Psoas muscle (tissue), 8 donors: ENCODE measurements at regions of chr3 and their contacts with region 1.

Region 1: DNA sequence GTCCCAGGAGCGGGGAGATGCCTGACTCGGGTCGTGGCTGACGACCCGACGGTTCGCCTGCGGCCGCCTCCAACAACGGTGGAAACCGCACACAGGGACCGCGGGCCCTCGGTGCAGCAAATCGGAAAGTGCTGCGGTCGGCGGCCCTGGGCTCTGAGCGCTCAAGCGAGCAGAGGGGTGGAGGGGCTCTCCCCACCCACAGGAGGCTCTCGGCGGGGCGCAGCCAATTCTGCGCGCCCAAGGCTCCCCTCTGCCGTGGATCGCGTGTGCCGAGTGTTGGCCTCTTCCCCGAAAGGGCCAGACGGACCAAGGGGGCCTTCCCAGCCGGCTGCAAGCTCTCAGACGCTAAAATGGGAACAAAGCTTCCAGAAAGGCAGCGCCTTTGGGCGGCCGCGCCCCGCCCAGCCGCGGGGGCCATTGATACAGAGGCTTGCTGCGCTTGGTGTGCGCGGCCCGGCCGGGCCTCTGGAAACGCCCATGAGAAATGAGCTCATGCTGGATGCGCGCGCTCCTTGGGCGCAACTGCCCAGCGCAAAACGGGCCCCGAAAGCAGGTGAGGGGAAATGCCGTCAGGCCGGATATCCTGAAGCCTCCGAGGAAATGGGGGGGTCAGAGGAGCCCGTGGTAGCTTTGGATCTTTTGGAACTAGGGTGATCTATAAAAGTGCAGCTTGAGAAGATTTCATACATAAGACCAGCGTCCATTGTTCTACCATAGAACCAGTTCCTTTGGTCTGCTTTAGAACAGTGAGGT is 1.2 kb upstream of the GSK3B start:
- DNase-seq: peak; percentile 91 to 94
- ATAC-seq: peak; percentile 62 to 71 (median 64)
- H3K4me3 ChIP-seq: peak overlapping the region; percentile 96
- H3K27ac ChIP-seq: peak overlapping the region; percentile 100
- H3K4me1 ChIP-seq: peaks cover 11% of the 10 kb centered on the region
- H3K27me3 ChIP-seq: no peaks in the 10 kb centered on the region
- CTCF ChIP-seq: no peak

Region 2: DNA sequence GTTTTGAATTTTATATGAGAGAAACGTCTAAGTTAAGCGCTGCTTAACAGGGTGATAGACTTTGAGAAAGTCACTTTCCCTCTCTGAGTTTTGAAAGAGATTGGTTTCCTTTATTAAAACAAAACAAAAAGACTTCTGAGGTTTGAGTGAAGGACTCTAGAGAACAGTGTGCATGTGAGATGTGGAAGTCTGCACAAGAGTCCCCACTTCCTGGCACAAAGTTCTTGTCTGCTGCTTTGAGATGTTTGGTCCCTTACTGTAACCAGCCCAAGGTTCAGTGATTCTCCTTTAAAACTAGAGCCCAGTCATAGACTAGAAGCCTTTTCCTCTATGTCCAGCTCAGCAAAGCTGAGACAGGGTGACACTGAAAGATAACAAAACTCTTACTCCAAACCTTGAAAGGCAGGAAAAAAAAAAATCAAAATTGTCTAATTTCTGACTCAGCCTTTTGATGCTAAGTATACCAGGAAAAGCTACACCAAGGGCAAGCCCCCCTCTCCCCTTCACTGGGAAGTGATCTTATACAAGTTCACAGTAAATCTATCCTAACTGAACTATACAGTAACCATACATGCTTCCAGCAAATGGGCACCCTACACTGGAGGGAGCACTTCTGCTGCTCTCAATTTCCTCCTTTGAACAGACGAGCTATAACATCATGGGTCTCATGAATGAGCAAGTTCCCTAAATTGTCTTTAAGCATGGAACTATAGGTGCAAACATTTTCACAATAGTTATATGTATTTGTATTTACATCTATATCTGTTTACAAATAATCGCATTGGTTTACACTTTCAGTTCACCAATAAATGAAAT is 437.3 kb before region 1 on chr3:
- intact Hi-C with region 1: loop called in 1 of 2 experiments (anchors 5 kb)
- DNase-seq: no peak
- ATAC-seq: no peak
- H3K4me3 ChIP-seq: peak overlapping the region; percentile 71
- H3K27ac ChIP-seq: peak overlapping the region; percentile 97
- H3K4me1 ChIP-seq: peaks cover 44% of the 10 kb centered on the region
- H3K27me3 ChIP-seq: no peaks in the 10 kb centered on the region
- CTCF ChIP-seq: no peak

Region 3: GRCh38 chr3:120039642-120040610 is 55.5 kb before region 1 on chr3:
- intact Hi-C with region 1: no loop called
- DNase-seq: no peak
- ATAC-seq: peak in 1 of 4 donors; percentile 36
- H3K4me3 ChIP-seq: no peak overlapping the region
- H3K27ac ChIP-seq: no peak overlapping the region
- H3K4me1 ChIP-seq: peaks cover 11% of the 10 kb centered on the region
- H3K27me3 ChIP-seq: no peaks in the 10 kb centered on the region
- CTCF ChIP-seq: no peak

Region 4: DNA sequence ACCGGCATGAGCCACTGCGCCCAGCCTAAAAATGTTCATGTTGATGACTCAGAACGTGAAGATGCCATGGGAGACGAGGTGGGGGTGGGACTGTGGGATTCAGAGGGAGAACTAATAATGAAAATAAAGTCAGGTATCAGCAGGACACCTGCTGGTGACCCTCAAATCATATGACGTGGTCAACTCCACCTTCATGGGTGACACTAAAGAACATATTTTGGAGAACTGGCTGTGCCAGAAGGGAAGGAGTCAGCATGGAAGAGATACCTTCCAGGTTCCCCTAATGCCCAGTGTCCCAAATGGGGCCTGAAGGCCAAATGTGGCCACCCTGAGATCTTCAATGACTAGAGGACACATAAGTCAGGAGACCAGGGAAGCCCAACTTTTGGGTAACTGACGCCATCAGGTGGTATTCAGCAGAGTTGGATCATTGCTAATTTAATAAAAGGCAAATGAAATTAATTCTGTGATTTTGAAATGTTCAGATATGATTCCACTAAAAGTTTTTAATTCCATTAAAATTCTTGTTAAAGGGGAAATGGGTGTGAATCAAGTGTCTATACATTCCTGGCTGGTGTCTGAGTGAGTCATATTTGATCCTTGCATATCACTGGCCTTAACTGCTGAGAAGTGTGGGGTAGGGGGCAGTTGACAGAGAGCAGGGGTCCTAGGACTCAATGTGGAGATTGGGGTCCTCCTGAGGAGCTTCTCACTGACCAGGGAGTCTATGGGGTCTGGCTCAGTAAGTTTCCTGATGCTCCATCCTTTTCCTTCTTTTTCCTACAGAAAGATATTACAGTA is 87.5 kb after region 1 on chr3:
- intact Hi-C with region 1: loop called in 1 of 2 experiments (anchors 5 kb)
- DNase-seq: no peak
- ATAC-seq: peak in 2 of 4 donors; percentile 64 to 77
- H3K4me3 ChIP-seq: no peak overlapping the region
- H3K27ac ChIP-seq: no peak overlapping the region
- H3K4me1 ChIP-seq: peaks cover under 1% of the 10 kb centered on the region
- H3K27me3 ChIP-seq: no peaks in the 10 kb centered on the region
- CTCF ChIP-seq: peak; percentile 33

Region 5: DNA sequence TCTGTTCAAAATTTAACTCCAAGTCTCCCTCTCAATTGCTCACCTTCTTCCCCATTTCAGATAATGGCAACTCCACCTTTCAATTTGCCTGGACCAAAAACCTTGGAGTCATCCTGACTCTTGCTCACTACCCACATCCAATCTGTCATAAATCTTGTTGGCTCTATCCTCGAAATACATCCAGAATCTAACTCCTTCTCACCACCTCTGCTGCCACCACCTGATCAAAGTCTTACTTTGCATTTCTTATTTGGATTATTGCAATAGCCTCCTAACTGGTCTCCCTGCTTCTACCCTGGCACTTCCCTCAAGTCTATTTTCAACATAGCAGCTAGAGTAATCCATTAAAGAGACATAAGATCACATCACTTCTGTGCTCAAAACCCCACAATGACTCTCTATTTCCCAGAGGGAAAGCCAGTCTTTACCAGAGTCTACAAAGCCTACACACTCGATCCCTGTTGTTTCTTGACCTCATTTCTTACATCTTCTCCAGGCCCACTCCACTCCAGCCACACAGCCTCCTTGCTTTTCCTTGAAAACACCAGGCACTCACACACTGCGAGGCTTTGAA is 103.0 kb after region 1 on chr3:
- intact Hi-C with region 1: loop called in 1 of 2 experiments (anchors 5 kb)
- DNase-seq: no peak
- ATAC-seq: peak; percentile 55 to 70 (median 65)
- H3K4me3 ChIP-seq: no peak overlapping the region
- H3K27ac ChIP-seq: no peak overlapping the region
- H3K4me1 ChIP-seq: peaks cover 18% of the 10 kb centered on the region
- H3K27me3 ChIP-seq: no peaks in the 10 kb centered on the region
- CTCF ChIP-seq: no peak